Panc1 (cell line): ENCODE measurements at regions of chr5 and their contacts with region 1.

Region 1: GRCh38 chr5:28896949-28897348 is 1858.6 kb upstream of the CDH9 start:
- DNase-seq: no peak
- ATAC-seq: no peak
- H3K4me3 ChIP-seq: no peak overlapping the region
- H3K27ac ChIP-seq: no peak overlapping the region
- H3K4me1 ChIP-seq: no peaks in the 10 kb centered on the region
- H3K27me3 ChIP-seq: no peaks in the 10 kb centered on the region
- CTCF ChIP-seq: no peak

Region 2: GRCh38 chr5:28779161-28779754 is 117.7 kb before region 1 on chr5:
- CTCF ChIA-PET with region 1: interaction called, 3 read pairs
- POLR2A ChIA-PET with region 1: no interaction called
- in situ Hi-C with region 1: no loop called
- intact Hi-C with region 1: loop called (anchors 2 kb)
- DNase-seq: peak; percentile 13
- ATAC-seq: no peak
- H3K4me3 ChIP-seq: no peak overlapping the region
- H3K27ac ChIP-seq: no peak overlapping the region
- H3K4me1 ChIP-seq: no peaks in the 10 kb centered on the region
- H3K27me3 ChIP-seq: no peaks in the 10 kb centered on the region
- CTCF ChIP-seq: peak; percentile 42; the same call in 1 of the 2 replicates

Region 3: GRCh38 chr5:28822071-28822470 is 74.9 kb before region 1 on chr5:
- CTCF ChIA-PET with region 1: no interaction called
- POLR2A ChIA-PET with region 1: no interaction called
- in situ Hi-C with region 1: no loop called
- intact Hi-C with region 1: no loop called
- DNase-seq: no peak
- ATAC-seq: no peak
- H3K4me3 ChIP-seq: no peak overlapping the region
- H3K27ac ChIP-seq: no peak overlapping the region
- H3K4me1 ChIP-seq: no peaks in the 10 kb centered on the region
- H3K27me3 ChIP-seq: no peaks in the 10 kb centered on the region
- CTCF ChIP-seq: no peak